ENCODE measurements at regions of chr11 and their contacts with region 1.

Region 1: GRCh38 chr11:45846974-45847910 is at the start of gene CRY2:
- DNase-seq: peak; percentile 99 to 100 (median 100)

Region 2: DNA sequence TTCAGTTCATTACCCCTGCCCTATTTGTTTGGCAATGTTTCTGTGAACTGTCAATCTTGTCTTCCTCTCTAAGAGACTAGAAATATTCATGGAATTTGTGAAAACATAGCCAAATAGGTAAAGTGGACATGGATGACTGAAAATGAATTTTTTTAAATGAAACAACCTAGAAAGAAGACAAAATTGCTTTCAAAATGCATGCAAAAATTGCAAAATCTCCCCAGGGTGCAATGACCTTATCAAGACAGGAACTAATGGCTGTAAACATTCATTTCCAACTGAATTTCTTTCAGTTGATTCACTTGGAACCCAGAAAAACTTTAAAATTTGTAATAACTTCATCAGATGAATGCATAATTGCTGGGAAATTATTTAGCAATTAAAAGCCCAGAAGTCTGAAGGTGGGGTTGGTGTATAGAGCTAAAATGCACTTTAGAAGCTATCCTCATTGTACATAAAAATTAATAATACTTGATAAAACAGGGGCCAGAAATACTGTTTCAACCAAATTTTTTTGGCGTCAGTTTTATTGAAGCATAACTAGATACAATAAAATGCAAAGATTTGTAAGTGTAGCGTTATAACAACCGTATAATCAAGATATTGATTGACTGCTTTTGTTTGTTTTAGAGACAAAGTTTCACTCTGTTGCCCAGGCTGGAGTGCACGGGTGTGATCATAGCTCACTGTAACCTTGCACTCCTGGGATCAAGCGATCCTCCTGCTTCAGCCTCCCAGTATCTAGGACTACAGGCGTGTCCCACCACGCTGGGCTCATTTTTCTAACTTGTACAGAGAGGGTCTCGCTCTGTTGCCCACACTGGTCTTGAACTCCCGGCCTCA is 69.9 kb before region 1 on chr11:
- intact Hi-C with region 1: no loop called
- DNase-seq: no peak

Region 3: DNA sequence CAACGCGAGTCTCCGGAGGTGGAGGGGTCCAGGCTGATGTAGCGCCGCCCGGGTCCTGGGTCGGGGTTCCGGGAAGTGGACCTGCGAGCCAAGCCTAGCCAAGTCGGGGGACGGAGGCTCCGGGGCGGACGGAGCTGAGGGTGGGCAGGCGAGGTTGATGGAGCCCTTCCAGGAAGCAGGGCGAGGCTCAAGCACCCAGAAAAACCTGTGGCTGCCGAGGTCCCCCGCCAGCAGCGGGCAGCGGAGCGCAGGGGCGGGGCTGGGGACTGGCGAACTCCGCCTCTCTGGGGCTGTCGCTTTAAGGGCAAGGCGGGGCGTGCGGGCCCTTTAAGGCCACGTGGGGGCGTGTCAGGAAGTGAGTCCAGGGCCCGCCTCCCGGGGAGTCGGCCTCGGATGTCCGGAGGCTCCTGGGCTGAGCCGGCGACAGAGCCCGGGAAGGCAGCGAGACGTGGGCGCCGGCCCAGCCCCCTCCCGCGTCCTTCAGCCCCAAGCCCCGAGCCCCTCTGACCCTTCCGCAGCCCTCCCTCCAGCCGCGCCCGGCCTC is 42.4 kb before region 1 on chr11 and contains the start of gene SLC35C1:
- intact Hi-C with region 1: loop called (anchors 5 kb)
- DNase-seq: peak; percentile 94 to 100 (median 98)

Region 4: GRCh38 chr11:45899448-45900173 is 52.4 kb after region 1 on chr11:
- intact Hi-C with region 1: loop called (anchors 10 kb)
- DNase-seq: peak; percentile 86 to 99 (median 91)

Measured in posterior cingulate gyrus (tissue), 11 donors.